Panc1 (cell line): ENCODE measurements at regions of chr12 and their contacts with region 1.

Region 1: GRCh38 chr12:8078398-8078797 is 3.7 kb upstream of the NECAP1 start:
- DNase-seq: no peak
- ATAC-seq: no peak
- H3K4me3 ChIP-seq: no peak overlapping the region
- H3K27ac ChIP-seq: no peak overlapping the region
- H3K4me1 ChIP-seq: no peaks in the 10 kb centered on the region
- H3K27me3 ChIP-seq: no peaks in the 10 kb centered on the region
- CTCF ChIP-seq: peak; percentile 45

Region 2: GRCh38 chr12:7068240-7068993 is 1010.0 kb before region 1 on chr12:
- CTCF ChIA-PET with region 1: no interaction called
- POLR2A ChIA-PET with region 1: no interaction called
- in situ Hi-C with region 1: no loop called
- intact Hi-C with region 1: no loop called
- DNase-seq: no peak
- ATAC-seq: no peak
- H3K4me3 ChIP-seq: no peak overlapping the region
- H3K27ac ChIP-seq: no peak overlapping the region
- H3K4me1 ChIP-seq: no peaks in the 10 kb centered on the region
- H3K27me3 ChIP-seq: no peaks in the 10 kb centered on the region
- CTCF ChIP-seq: no peak

Region 3: GRCh38 chr12:7884689-7885088 is 193.7 kb before region 1 on chr12:
- CTCF ChIA-PET with region 1: no interaction called
- POLR2A ChIA-PET with region 1: no interaction called
- in situ Hi-C with region 1: no loop called
- intact Hi-C with region 1: no loop called
- DNase-seq: no peak
- ATAC-seq: no peak
- H3K4me3 ChIP-seq: no peak overlapping the region
- H3K27ac ChIP-seq: no peak overlapping the region
- H3K4me1 ChIP-seq: no peaks in the 10 kb centered on the region
- H3K27me3 ChIP-seq: no peaks in the 10 kb centered on the region
- CTCF ChIP-seq: no peak

Region 4: GRCh38 chr12:8045952-8046944 is 32.1 kb before region 1 on chr12:
- CTCF ChIA-PET with region 1: interaction called, 5 read pairs
- POLR2A ChIA-PET with region 1: no interaction called
- in situ Hi-C with region 1: no loop called
- intact Hi-C with region 1: loop called (anchors 1 kb)
- DNase-seq: peak; percentile 38
- ATAC-seq: peak; percentile 83
- H3K4me3 ChIP-seq: no peak overlapping the region
- H3K27ac ChIP-seq: no peak overlapping the region
- H3K4me1 ChIP-seq: no peaks in the 10 kb centered on the region
- H3K27me3 ChIP-seq: no peaks in the 10 kb centered on the region
- CTCF ChIP-seq: peak; percentile 86

Region 5: GRCh38 chr12:8108808-8109398 is 30.5 kb after region 1 on chr12:
- CTCF ChIA-PET with region 1: no interaction called
- POLR2A ChIA-PET with region 1: interaction called, 12 read pairs
- in situ Hi-C with region 1: no loop called
- intact Hi-C with region 1: no loop called
- DNase-seq: peak; percentile 57
- ATAC-seq: peak; percentile 75
- H3K4me3 ChIP-seq: no peak overlapping the region
- H3K27ac ChIP-seq: no peak overlapping the region
- H3K4me1 ChIP-seq: no peaks in the 10 kb centered on the region
- H3K27me3 ChIP-seq: no peaks in the 10 kb centered on the region
- CTCF ChIP-seq: peak; percentile 86